Dorsolateral prefrontal cortex (tissue), 120 donors: ENCODE measurements at regions of chr6 and their contacts with region 1.

Region 1: DNA sequence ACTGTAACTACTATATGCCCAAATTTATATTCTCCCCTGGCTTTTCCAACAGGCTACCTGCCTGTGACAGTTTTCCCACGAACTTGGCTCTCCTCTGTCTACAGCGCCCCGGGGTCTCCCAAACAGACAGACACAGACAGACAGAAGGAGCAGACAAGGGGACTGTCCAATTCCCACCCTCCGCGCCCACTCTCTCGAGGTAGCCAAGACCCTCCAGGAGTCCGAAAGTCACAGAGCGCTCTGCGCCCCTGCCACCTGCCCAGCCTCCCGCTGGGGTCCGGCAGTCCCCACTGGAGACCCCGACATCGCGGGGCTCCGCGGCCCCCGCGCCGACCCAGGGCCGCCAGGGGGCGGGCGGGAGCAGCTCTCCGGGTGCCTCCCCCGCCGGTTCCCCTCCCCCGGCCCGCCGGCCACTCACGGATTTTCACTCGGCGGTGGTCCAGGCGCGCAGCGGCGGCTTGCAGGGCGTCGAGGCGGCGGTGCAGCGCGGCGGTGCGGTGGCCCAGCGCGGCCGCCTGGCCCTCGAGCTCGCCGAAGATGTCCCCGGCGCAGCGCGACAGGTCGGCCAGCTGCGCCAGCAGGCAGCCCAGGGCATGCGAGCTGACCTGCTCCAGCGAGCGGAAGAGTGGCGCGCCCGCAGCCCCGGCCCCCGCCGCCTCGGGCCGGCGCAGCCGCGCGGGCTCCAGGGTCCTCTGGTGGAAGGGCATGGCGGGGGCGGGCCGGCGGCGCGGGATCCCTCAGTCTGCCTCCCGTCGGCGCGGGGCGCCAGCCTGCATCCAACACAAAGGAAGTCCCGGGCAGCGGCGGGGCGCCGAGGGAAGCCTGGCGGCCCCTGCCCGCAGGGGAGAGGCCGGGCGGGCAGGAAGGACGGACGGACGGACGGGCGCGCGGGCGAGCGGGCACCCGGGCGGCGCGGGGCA is 81.3 kb upstream of the CCDC28A start:
- DNase-seq: peak in 6 of 10 donors; percentile 29 to 75 (median 46)
- H3K4me3 ChIP-seq: peak overlapping the region; percentile 36 to 79 (median 64)
- H3K27ac ChIP-seq: peak overlapping the region in 47 of 59 donors; percentile 8 to 85 (median 55)
- H3K27me3 ChIP-seq: peaks cover 0 to 35% (median 7%) of the 10 kb centered on the region in 45 donors
- CTCF ChIP-seq: peak; percentile 20 to 92 (median 72)

Region 2: DNA sequence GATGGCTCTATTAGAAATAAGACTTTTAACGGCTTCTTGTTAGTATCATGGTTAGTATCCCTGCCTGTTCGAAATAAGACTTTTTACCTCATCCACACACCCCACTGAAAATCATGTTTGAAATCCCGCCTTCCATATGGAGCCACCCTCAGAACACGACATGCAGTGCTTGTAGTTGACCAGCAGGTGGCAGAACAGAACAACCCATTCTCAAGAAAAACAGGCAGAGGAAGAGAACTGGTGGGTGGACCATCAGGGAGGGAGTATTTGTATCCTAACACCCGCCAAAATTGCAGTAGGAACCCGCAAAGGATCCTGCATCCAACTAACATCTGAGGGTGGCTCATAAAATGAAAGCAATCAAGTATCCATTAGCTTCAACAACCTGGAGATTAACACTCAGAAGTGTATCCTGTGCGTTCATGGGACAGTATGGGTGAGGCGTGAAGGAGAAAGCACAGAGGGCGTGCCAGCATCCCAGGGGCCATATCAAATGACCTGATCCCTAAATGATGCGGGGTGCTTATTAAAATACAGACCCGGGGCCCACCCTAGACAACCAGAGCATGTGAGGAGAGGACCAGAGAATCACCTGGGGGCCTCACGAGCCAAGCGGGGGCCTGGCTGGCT is 103.4 kb before region 1 on chr6:
- intact Hi-C with region 1: loop called in 1 of 2 experiments (anchors 5 kb)
- DNase-seq: peak in 7 of 10 donors; percentile 47 to 64 (median 56)
- H3K4me3 ChIP-seq: no peak overlapping the region
- H3K27ac ChIP-seq: no peak overlapping the region
- H3K27me3 ChIP-seq: peaks cover 0 to 3% (median 0%) of the 10 kb centered on the region in 45 donors
- CTCF ChIP-seq: peak; percentile 80 to 99 (median 95)

Region 3: DNA sequence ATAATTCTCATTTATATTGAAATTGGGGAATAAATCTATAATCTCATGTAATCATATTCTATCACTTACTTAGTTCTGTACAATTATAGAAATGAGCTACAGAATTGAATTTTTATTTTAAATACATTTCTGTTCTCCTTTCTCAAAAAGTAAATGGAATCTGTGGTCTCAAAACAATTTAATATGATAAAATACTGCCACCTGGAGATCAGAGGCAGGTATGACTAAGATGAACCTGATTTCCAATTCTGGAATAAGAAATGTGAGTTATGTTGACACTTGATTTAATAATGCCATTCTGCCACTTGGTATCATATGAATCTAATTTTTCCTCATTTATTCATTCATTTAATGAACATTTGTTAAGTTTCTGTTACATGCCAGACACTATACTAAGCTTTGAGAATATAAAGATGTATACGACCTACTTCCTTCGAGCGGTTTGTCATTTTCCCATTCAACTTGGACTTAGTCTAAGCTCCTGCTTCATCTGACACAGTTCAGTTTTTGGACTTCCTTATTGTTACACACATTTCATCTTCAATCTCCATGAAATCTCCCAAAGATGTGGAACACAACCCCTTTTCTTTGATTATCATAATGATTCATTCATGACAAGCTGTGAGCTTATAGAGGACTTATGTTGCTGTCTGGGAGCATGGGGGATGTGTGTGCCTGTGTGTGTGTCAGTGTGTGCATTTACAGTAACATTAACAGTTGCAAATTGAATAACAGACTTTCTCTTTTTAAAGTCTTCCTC is 73.8 kb after region 1 on chr6:
- intact Hi-C with region 1: loop called in 1 of 2 experiments (anchors 5 kb)
- DNase-seq: no peak
- H3K4me3 ChIP-seq: no peak overlapping the region
- H3K27ac ChIP-seq: no peak overlapping the region
- H3K27me3 ChIP-seq: no peaks in the 10 kb centered on the region
- CTCF ChIP-seq: peak; percentile 47 to 88 (median 74)

Region 4: DNA sequence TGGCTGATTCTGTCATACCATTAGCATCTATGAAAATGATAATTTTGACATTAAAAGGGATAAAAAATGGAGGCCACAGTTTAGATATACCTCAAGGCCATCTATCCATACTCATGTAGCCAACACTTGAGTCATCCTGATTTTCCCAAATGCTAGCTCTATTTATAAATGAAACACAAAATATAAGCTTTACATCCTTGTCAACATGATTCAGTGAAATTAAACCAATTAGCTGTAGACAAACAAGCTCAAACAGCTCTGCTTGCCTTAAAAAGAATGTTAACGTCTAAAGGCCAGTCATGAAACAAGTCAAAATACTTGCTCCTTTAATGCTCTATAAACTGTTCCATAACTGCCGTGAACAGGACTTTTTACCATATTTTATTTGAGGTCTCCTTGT is 376.5 kb after region 1 on chr6:
- intact Hi-C with region 1: no loop called
- DNase-seq: no peak
- H3K4me3 ChIP-seq: no peak overlapping the region
- H3K27ac ChIP-seq: no peak overlapping the region
- H3K27me3 ChIP-seq: no peaks in the 10 kb centered on the region
- CTCF ChIP-seq: no peak